Esophagus muscularis mucosa (tissue), 4 donors: ENCODE measurements at regions of chr10 and their contacts with region 1.

Region 1: GRCh38 chr10:17257466-17258321 is 29.7 kb downstream of the VIM start:
- DNase-seq: no peak
- H3K4me3 ChIP-seq: peak overlapping the region in 3 of 4 donors; percentile 12 to 37 (median 19)
- H3K27ac ChIP-seq: no peak overlapping the region
- H3K4me1 ChIP-seq: peaks cover 0 to 3% (median 0%) of the 10 kb centered on the region in 4 donors
- H3K27me3 ChIP-seq: no peaks in the 10 kb centered on the region
- CTCF ChIP-seq: peak; percentile 82 to 87 (median 86)
- EP300 ChIP-seq: no peak
- POLR2A ChIP-seq: no peak

Region 2: GRCh38 chr10:16828114-16828568 is 429.6 kb before region 1 on chr10:
- intact Hi-C with region 1: loop called (anchors 1 kb)
- DNase-seq: no peak
- H3K4me3 ChIP-seq: peak overlapping the region in 1 of 4 donors; percentile 12
- H3K27ac ChIP-seq: peak overlapping the region in 3 of 4 donors; percentile 35 to 62 (median 53)
- H3K4me1 ChIP-seq: peaks cover 9 to 25% (median 21%) of the 10 kb centered on the region in 4 donors
- H3K27me3 ChIP-seq: no peaks in the 10 kb centered on the region
- CTCF ChIP-seq: peak; percentile 47 to 68 (median 47)
- EP300 ChIP-seq: no peak
- POLR2A ChIP-seq: no peak

Region 3: DNA sequence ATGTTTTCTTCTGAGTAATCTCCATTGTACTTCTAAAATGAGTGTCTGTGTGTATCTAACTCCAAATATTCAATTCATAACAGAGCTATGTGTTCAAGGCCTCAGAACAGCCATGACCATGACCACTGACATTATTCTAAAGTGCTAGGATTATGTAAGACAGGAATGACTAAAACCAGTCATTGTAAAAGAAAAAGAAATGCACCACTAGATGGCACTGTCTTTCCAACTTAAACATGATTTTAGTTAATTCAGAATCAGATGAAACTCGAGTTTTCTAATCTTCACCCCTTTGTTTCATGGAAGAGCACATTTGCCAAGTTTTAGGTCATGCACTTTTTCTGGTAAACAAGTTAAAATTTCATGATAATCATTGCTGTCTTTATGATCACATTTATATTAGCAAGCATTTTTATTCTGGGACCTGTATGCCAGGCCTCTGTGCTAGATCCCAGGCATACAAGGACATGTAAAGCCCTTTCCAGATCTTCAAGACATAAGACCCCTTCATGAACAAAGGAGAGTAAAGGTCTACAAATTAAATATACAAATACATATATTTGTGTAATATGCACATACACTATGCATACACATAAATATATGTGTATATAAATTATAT is 414.3 kb before region 1 on chr10:
- intact Hi-C with region 1: loop called (anchors 2 kb)
- DNase-seq: no peak
- H3K4me3 ChIP-seq: no peak overlapping the region
- H3K27ac ChIP-seq: no peak overlapping the region
- H3K4me1 ChIP-seq: peaks cover 0 to 3% (median 0%) of the 10 kb centered on the region in 4 donors
- H3K27me3 ChIP-seq: no peaks in the 10 kb centered on the region
- CTCF ChIP-seq: peak; percentile 61 to 76 (median 67)
- EP300 ChIP-seq: no peak
- POLR2A ChIP-seq: no peak